Activated naive CD4-positive, alpha-beta T cell treated with anti-CD3 and anti-CD28 coated beads for 36 hours (primary cell): ENCODE measurements at regions of chr10 and their contacts with region 1.

Region 1: DNA sequence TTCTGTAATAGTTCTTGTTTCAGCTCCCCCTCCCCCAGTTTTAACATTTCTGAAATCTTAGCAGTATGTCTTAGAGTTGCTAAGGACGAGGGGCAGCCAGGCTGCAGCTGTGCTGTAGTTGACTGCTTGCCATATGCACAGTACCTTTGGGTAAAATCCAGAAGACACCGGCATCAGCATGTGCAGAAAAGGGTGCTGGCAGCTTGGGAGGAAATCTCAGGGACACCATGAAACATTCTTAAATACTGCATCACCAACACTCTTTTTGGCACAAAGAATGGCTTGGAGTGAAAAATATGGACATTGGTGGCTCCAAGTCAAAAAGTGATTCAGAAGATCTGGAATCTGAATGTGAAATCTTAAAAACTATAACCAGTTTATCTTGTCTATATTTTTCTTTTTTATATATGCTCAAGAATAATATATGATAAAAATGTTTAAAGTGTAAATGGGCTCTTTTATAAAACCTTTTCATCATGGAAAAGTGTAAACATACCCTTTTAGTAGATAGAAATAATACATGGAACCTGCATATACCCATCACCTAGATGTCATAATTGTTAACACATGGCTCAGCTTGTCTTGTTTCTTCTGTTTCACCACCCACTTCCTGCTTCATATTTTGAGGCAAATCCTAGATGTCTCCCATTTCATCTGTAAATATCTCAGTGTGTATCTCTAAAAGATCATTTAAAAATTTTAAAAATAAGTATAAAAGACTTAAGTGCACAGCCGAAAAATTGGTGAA is 34.4 kb upstream of the ARMS2 start:
- DNase-seq: no peak
- H3K4me3 Mint-ChIP-seq: no peak overlapping the region
- H3K27ac Mint-ChIP-seq: no peak overlapping the region
- H3K4me1 Mint-ChIP-seq: peaks cover 74% of the 10 kb centered on the region
- H3K27me3 Mint-ChIP-seq: no peaks in the 10 kb centered on the region

Region 2: DNA sequence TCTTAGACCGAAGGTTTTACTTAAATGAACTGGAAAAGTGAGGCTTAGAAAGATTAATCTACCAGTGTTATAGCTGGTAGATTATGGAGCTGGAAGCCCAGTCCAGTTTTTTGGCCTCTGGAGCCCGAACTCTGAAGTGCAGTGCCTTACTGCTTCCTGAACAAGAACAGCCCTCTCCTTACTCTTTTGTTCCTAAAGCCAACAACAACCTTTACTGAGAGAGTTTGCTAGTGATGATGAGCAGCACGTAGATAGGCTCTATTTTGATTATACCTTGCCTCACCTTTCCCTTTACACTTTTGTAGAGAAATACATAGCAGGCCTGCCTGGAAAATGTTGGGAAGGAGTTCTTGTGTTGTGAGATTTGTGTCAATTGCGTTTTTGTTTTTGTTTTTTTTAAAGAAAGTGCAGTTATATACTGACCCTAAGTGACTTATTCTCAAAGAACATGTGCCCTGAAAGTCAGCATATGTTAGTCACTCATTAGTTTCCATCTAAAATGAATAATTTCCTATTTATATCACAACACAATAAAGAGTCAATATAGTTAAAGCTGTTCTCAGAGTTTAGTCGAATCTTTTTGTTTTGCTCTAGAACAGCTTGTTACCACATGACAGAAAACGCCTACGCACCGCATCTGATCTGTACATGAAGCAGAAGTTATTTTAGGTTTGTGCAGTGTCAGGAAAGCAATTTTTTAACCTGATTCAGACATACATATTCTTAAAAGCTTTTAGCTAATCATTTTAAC is 12.5 kb before region 1 on chr10:
- CTCF ChIA-PET with region 1: interaction called, 6 read pairs
- intact Hi-C with region 1: loop called (anchors 1 kb)
- DNase-seq: peak; percentile 88
- H3K4me3 Mint-ChIP-seq: peak overlapping the region; percentile 30
- H3K27ac Mint-ChIP-seq: peak overlapping the region; percentile 46
- H3K4me1 Mint-ChIP-seq: peaks cover 47% of the 10 kb centered on the region
- H3K27me3 Mint-ChIP-seq: no peaks in the 10 kb centered on the region

Region 3: DNA sequence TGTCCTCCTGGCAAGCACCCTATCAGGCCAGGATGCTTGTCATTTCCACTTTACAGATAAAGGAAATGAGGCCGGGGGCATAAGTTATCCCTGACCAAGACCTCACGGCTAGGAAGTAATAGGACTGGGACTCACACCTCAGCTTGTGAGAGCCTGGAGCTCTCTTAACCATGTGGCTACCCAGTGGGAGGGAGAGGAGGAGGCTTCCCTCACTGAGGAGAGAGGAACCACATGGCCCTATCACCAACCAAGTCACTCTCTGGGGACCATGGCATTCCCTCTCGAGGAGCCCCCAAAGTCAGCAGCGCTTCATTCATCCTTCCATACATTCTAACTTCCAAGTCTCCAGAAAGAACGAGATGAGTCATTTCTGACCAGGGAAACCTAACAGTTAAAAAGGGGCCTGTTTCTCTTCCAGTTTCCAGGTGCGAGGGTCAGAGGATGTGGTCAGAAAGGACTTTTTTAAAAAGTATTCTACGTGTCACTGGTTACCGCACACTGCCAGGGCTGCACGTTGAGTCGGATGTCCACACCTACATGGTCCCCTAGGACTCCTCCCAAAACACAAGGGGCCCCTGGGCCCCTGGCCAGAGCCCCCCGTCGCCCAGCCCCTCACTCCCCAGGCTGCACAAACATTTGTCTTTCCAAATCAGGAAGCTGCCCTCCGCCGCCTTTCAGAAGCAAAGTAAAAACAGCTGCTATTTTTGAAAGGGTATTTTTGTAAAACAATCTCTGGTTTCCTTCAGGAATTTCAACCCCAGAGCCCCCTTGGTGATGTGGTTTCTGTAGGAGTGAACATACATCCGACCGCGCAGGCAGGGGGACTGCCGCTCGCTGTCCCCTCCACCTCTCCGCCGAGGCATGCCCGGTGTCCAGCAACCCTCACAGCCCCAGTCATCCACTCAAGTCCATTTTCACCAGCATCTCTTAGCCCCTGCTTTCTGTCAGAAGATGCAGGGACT is 1801.6 kb after region 1 on chr10:
- CTCF ChIA-PET with region 1: no interaction called
- intact Hi-C with region 1: loop called (anchors 10 kb)
- DNase-seq: no peak
- H3K4me3 Mint-ChIP-seq: no peak overlapping the region
- H3K27ac Mint-ChIP-seq: no peak overlapping the region
- H3K4me1 Mint-ChIP-seq: no peaks in the 10 kb centered on the region
- H3K27me3 Mint-ChIP-seq: no peaks in the 10 kb centered on the region